ENCODE measurements at regions of chr18 and their contacts with region 1.

Region 1: DNA sequence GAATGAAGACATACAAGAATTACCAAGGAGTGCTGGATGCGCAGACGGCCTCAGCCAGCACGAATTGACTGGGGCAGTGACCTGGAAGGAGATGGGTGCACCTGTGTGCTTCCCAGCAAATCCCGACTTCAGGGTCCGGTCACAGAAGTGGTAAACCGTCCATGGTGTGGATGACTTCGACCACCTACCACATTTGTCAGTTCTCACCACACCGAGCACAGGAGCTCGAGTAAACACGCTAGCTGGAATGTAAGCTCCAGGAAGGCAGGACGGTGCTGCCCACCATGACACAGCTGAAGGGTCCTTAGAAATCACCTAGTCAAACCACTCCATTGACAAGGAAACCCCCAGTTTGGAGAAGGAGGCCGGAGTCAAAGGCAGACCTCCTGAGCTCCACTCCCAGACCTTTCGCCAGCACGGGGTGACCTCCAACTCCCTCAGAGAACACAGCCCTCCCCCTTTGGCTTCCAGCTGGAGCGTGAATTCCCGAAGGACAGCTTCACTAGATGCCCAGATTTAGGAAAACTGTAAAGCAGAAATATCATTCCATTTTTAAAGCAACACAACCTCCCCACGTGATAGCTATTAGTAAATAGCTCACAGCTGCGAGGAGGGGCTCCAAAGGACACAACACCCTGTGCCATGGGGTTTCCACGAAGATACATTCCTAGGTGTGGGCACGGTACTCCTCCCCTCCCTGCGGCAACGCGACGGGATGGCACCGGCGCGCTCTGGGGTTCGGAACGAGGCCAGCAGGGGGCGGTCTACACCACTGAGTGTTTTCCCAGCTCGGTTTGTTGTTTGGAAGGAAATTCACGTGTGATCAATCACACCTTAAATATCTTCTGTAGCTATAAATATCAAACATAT is 34.1 kb upstream of the GNAL start:
- DNase-seq: peak; percentile 53
- H3K4me3 ChIP-seq: no peak overlapping the region
- H3K27ac ChIP-seq: no peak overlapping the region
- H3K4me1 ChIP-seq: no peaks in the 10 kb centered on the region
- CTCF ChIP-seq: peak; percentile 91

Region 2: DNA sequence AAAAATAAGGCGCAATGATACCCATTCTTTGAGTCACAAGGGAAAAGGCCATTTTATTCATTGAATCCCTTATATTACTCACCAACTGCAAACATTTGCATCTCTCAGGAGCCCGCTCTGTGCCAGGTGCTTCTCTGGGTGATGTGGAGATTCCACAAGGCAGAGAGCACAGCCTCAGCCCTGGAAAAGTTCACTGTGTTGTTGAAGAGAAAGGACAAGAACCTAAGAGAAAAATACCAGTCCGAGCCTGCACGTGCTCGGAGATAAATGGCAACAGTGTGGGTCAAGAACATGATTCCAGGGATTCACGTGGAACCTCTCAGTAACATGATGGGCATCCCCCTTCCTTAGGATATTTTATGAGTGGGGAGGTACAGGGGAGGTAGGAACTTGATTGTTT is 45.9 kb after region 1 on chr18:
- CTCF ChIA-PET with region 1: no interaction called
- POLR2A ChIA-PET with region 1: no interaction called
- intact Hi-C with region 1: no loop called
- DNase-seq: no peak
- H3K4me3 ChIP-seq: no peak overlapping the region
- H3K27ac ChIP-seq: no peak overlapping the region
- H3K4me1 ChIP-seq: no peaks in the 10 kb centered on the region
- CTCF ChIP-seq: no peak

Region 3: GRCh38 chr18:11821643-11822237 is 166.8 kb after region 1 on chr18:
- CTCF ChIA-PET with region 1: no interaction called
- POLR2A ChIA-PET with region 1: no interaction called
- intact Hi-C with region 1: no loop called
- DNase-seq: no peak
- H3K4me3 ChIP-seq: no peak overlapping the region
- H3K27ac ChIP-seq: no peak overlapping the region
- H3K4me1 ChIP-seq: no peaks in the 10 kb centered on the region
- CTCF ChIP-seq: no peak

Region 4: GRCh38 chr18:12236934-12237832 is 582.2 kb after region 1 on chr18:
- CTCF ChIA-PET with region 1: no interaction called
- POLR2A ChIA-PET with region 1: no interaction called
- intact Hi-C with region 1: loop called (anchors 5 kb)
- DNase-seq: peak; percentile 51
- H3K4me3 ChIP-seq: no peak overlapping the region
- H3K27ac ChIP-seq: no peak overlapping the region
- H3K4me1 ChIP-seq: no peaks in the 10 kb centered on the region
- CTCF ChIP-seq: peak; percentile 90

Measured in OCI-LY7 (cell line).